Gastrocnemius medialis (tissue), 4 donors: ENCODE measurements at regions of chr16 and their contacts with region 1.

Region 1: GRCh38 chr16:71610936-71611871 is 14.8 kb upstream of the MARVELD3 start:
- DNase-seq: no peak
- ATAC-seq: no peak
- H3K4me3 ChIP-seq: no peak overlapping the region
- H3K27ac ChIP-seq: no peak overlapping the region
- H3K4me1 ChIP-seq: no peaks in the 10 kb centered on the region
- H3K27me3 ChIP-seq: peaks cover 0 to 10% (median 3%) of the 10 kb centered on the region in 3 donors
- CTCF ChIP-seq: peak; percentile 22 to 63 (median 47)
- POLR2A ChIP-seq: no peak

Region 2: DNA sequence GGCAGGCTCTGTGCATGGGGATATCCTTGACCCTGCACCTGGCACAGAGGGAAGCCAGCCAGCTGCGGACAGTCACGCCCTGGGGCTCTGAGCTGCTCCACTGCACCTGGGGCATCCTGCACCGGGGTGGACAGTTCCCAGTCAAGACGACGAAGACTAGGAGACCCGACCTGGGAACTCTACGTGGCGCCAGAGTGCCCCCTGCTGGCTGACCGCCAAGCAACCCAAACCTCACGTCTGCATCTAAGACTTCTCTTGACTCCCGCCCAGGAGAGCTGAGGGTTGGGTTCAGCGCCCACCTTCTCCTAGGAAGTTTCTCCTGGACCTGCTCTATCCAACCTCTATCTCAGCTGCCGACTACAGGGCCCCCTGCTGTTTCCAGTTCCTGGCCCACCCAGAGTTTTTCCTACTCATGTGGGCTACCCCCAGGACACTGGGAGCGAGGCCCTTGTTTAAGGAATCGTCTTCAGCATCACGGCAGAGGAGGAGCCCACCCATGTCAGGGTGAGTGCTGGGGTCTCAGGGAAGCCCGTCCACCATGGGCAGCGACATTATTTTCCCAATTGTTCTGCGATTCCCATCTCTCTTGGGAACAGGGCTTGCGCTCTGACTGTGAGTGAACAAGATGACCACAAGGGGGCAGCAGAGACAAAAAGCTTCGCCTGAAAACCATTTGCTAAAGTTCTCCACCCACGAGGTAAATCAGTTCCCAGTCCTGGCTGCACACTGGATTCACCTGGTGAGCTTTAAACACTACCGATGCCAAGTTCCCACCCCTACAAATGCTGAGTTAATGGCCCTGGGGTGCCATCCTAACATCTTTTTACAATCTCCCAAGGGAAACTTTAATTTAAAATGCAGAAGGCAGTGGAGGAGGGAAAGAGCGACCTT is 198.7 kb before region 1 on chr16:
- in situ Hi-C with region 1: loop called in 3 of 4 experiments (anchors 25 kb)
- intact Hi-C with region 1: no loop called
- DNase-seq: peak; percentile 26 to 43
- ATAC-seq: peak; percentile 62 to 81
- H3K4me3 ChIP-seq: no peak overlapping the region
- H3K27ac ChIP-seq: no peak overlapping the region
- H3K4me1 ChIP-seq: no peaks in the 10 kb centered on the region
- H3K27me3 ChIP-seq: peaks cover 0 to 4% (median 3%) of the 10 kb centered on the region in 3 donors
- CTCF ChIP-seq: peak; percentile 49 to 87 (median 79)
- POLR2A ChIP-seq: no peak

Region 3: DNA sequence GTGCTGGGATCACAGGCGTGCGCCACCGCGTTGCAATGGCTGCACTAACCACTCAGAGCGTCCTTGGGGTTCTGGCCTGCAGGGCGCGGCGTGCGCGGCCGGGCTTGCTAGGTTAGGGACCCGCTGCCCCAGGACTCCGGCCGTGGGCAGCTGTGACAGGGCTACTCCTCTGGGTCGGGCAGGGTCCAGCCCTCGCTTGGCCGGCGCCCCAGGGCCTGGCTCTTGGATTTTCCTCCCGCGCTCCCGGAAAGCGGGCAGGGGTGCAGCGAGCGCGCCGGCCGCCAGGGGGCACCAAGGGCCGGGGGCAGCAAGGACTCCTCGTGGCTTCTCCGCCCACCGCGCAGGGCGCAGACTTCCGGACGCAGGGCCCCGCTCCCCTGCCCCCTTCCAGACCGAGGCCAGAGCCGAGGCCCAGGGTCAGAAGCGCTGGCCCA is 169.8 kb before region 1 on chr16:
- in situ Hi-C with region 1: no loop called
- intact Hi-C with region 1: no loop called
- DNase-seq: no peak
- ATAC-seq: no peak
- H3K4me3 ChIP-seq: no peak overlapping the region
- H3K27ac ChIP-seq: no peak overlapping the region
- H3K4me1 ChIP-seq: no peaks in the 10 kb centered on the region
- H3K27me3 ChIP-seq: no peaks in the 10 kb centered on the region
- CTCF ChIP-seq: peak in 2 of 5 experiments; percentile 17 to 20
- POLR2A ChIP-seq: no peak